H1 (cell line): ENCODE measurements at regions of chr13 and their contacts with region 1.

Region 1: GRCh38 chr13:75876360-75877050 is 240.4 kb downstream of the LMO7 start:
- DNase-seq: peak; percentile 27 to 70
- H3K4me3 ChIP-seq: no peak overlapping the region
- H3K27ac ChIP-seq: no peak overlapping the region
- H3K4me1 ChIP-seq: peaks cover 0 to 13% (median 2%) of the 10 kb centered on the region in 4 experiments; a peak in 3 of 7 replicates
- H3K27me3 ChIP-seq: no peaks in the 10 kb centered on the region
- CTCF ChIP-seq: peak; percentile 70 to 86 (median 82)
- EP300 ChIP-seq: no peak
- POLR2A ChIP-seq: no peak
- RAD21 ChIP-seq: peak; percentile 92 to 94

Region 2: GRCh38 chr13:75687150-75687763 is 189.2 kb before region 1 on chr13:
- CTCF ChIA-PET with region 1: interaction called, 25 read pairs
- POLR2A ChIA-PET with region 1: no interaction called
- DNase-seq: no peak
- H3K4me3 ChIP-seq: no peak overlapping the region
- H3K27ac ChIP-seq: no peak overlapping the region
- H3K4me1 ChIP-seq: peaks cover 2 to 7% (median 5%) of the 10 kb centered on the region in 4 experiments; a peak in 6 of 7 replicates
- H3K27me3 ChIP-seq: no peaks in the 10 kb centered on the region
- CTCF ChIP-seq: peak in 2 of 3 experiments; percentile 42 to 51; a peak in 2 of 4 replicates
- EP300 ChIP-seq: no peak
- POLR2A ChIP-seq: no peak
- RAD21 ChIP-seq: peak; percentile 64 to 65

Region 3: DNA sequence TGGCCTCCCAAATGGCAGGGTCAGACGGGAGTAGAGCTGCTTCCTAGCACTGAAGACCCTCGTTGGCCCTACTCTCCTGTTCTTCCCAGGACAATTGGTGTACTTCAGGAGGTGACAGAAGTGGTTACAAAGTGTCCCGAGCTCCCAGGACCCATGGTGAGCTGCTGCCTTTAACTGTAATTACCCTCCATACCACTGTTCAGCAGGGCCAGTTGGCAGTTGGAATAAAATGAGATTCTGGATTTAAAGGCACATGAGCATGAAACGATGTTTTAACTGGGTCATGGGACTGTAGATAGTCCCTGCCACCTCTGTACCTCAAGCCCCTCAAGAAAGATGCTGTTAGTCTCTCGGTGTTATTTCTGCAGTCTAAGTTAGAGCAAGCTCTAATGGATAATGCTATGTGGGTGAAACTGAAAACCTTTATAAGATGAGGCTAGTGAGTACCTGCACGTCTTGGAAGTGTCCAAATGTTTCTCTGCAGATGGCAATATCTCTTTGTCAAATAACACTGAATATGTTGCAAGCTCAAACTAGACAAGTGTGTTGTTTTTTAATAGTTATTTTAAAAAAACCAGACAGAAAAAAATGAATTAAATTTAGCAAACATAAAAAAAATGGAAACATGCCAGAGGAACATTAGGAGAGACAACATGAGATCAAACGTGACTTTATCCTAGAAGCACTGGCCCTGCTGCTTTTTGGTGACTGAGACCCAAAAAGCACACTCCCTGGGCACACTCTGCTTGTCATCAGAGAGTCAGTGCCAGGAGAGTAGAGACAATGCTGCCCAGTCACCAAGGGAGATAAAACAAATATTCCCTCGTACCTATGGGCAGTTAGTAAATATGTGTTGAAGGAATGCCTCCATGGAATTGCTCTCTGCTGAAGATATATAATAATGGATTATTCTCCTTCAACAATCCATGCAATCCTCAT is 25.9 kb after region 1 on chr13:
- CTCF ChIA-PET with region 1: interaction called, 31 read pairs
- POLR2A ChIA-PET with region 1: no interaction called
- DNase-seq: no peak
- H3K4me3 ChIP-seq: no peak overlapping the region
- H3K27ac ChIP-seq: no peak overlapping the region
- H3K4me1 ChIP-seq: no peaks in the 10 kb centered on the region
- H3K27me3 ChIP-seq: no peaks in the 10 kb centered on the region
- CTCF ChIP-seq: no peak
- EP300 ChIP-seq: no peak
- POLR2A ChIP-seq: no peak
- RAD21 ChIP-seq: no peak

Region 4: DNA sequence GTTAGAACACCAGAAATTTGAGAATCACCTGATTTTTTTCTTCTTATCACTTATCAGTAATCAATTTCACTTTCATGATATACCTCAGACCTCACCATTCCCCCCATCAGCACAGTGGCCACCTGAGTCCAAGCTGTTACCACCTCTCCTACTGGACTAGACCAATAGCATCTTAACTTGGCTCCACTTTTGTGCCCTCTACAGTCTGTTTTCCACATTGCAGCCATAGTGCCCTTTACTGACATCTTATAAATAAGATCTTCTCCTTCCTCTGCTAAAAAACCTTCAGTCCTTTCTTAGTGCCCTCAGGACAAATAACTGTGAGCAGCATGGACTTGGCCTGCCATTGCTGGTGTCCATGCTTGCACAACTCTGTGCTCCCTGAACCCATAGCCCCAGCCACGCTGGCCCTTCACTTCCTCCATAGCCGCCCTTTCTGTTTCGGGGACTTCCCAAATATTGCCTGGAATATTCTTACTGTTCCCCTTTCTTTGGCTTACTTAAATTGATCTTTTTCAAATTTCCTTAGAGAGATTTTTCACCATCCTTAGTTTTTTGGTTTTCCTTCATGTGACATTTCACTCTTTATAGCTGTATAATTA is 140.4 kb after region 1 on chr13:
- CTCF ChIA-PET with region 1: interaction called, 80 read pairs
- POLR2A ChIA-PET with region 1: no interaction called
- DNase-seq: peak in 1 of 2 experiments; percentile 73
- H3K4me3 ChIP-seq: no peak overlapping the region
- H3K27ac ChIP-seq: no peak overlapping the region
- H3K4me1 ChIP-seq: no peaks in the 10 kb centered on the region
- H3K27me3 ChIP-seq: no peaks in the 10 kb centered on the region
- CTCF ChIP-seq: peak; percentile 5 to 75 (median 52); a peak in 3 of 4 replicates
- EP300 ChIP-seq: no peak
- POLR2A ChIP-seq: no peak
- RAD21 ChIP-seq: peak; percentile 61

Region 5: GRCh38 chr13:76903544-76904162 is 1027.1 kb after region 1 on chr13:
- CTCF ChIA-PET with region 1: interaction called, 14 read pairs
- POLR2A ChIA-PET with region 1: no interaction called
- DNase-seq: peak; percentile 41 to 75
- H3K4me3 ChIP-seq: no peak overlapping the region
- H3K27ac ChIP-seq: no peak overlapping the region
- H3K4me1 ChIP-seq: no peaks in the 10 kb centered on the region
- H3K27me3 ChIP-seq: no peaks in the 10 kb centered on the region
- CTCF ChIP-seq: peak; percentile 75 to 99 (median 82)
- EP300 ChIP-seq: no peak
- POLR2A ChIP-seq: no peak
- RAD21 ChIP-seq: peak; percentile 98 to 99